ENCODE measurements at regions of chr12 and their contacts with region 1.

Region 1: GRCh38 chr12:56630160-56630632 is at the start of gene BAZ2A:
- DNase-seq: peak; percentile 92 to 96 (median 94)
- ATAC-seq: peak; percentile 78
- H3K4me3 ChIP-seq: peak within 1 kb of the TSS; percentile 96
- H3K4me1 ChIP-seq: peaks cover 41% of the 10 kb centered on the region
- CTCF ChIP-seq: no peak
- total RNA-seq, gene BAZ2A: 109 to 144 (median 110) TPM

Region 2: GRCh38 chr12:56688129-56688845 is 58.1 kb after region 1 on chr12 and contains the start of gene PTGES3:
- intact Hi-C with region 1: loop called in 1 of 2 experiments (anchors 5 kb)
- DNase-seq: peak; percentile 97 to 99 (median 98)
- ATAC-seq: peak; percentile 91
- H3K4me3 ChIP-seq: peak within 1 kb of the TSS; percentile 86
- H3K4me1 ChIP-seq: peaks cover 20% of the 10 kb centered on the region
- CTCF ChIP-seq: no peak
- total RNA-seq, gene PTGES3: 155 to 223 (median 164) TPM

Measured in mucosa of descending colon (tissue), 3 donors.